Activated CD4-positive, alpha-beta T cell treated with anti-CD3 and anti-CD28 coated beads, Interleukin-2, amount 10 ng/mL, durations not matched to agents 7 days and 5 days (primary cell): ENCODE measurements at regions of chr2 and their contacts with region 1.

Region 1: GRCh38 chr2:38315707-38316333 is 61.3 kb downstream of the ATL2 start:
- DNase-seq: peak; percentile 47
- H3K4me3 Mint-ChIP-seq: no peak overlapping the region
- H3K27ac Mint-ChIP-seq: no peak overlapping the region
- H3K4me1 Mint-ChIP-seq: peaks cover 10% of the 10 kb centered on the region
- H3K27me3 Mint-ChIP-seq: no peaks in the 10 kb centered on the region

Region 2: DNA sequence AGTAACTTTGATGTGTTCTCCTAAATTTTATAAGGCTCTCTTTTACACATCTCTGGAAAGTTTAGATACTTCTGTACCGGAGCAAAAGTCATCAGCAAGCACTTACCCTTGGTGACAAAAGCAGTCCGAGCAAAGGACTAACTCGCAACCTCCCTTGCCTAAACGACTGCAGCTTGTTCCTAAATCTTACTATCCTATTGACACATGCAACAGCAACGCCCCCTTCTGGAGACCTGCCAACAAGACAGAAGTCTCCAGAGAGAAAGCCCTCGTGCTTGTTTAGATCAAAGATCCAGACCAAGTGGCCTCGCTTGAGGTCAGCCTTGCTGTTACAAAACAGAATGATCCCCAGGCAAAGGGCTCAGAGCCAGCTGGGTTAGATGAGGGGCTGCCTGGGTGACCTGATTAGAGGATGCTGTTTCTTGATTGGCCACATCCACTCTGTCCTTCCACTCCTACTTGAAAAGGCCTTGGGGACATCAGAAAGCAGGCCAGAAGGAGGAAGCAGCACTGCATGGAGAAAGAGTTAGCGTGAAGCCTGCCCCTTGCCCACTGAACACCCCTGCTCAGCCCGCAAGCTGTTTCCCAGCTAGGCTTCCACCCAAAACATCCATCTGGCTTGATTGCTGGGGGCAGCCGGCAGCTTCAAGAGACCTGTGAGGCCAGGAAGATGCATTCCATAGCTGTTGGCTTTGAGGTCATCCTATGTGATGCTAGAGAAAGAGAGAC is 192.7 kb after region 1 on chr2:
- CTCF ChIA-PET with region 1: interaction called, 26 read pairs
- POLR2A ChIA-PET with region 1: no interaction called
- DNase-seq: peak; percentile 89
- H3K4me3 Mint-ChIP-seq: no peak overlapping the region
- H3K27ac Mint-ChIP-seq: no peak overlapping the region
- H3K4me1 Mint-ChIP-seq: peaks cover 11% of the 10 kb centered on the region
- H3K27me3 Mint-ChIP-seq: peaks cover 3% of the 10 kb centered on the region

Region 3: GRCh38 chr2:38535744-38536506 is 220.1 kb after region 1 on chr2:
- CTCF ChIA-PET with region 1: interaction called, 10 read pairs
- POLR2A ChIA-PET with region 1: no interaction called
- DNase-seq: peak; percentile 80
- H3K4me3 Mint-ChIP-seq: peak overlapping the region; percentile 30
- H3K27ac Mint-ChIP-seq: no peak overlapping the region
- H3K4me1 Mint-ChIP-seq: peaks cover 6% of the 10 kb centered on the region
- H3K27me3 Mint-ChIP-seq: peaks cover 26% of the 10 kb centered on the region